Psoas muscle (tissue), 8 donors: ENCODE measurements at regions of chr6 and their contacts with region 1.

Region 1: DNA sequence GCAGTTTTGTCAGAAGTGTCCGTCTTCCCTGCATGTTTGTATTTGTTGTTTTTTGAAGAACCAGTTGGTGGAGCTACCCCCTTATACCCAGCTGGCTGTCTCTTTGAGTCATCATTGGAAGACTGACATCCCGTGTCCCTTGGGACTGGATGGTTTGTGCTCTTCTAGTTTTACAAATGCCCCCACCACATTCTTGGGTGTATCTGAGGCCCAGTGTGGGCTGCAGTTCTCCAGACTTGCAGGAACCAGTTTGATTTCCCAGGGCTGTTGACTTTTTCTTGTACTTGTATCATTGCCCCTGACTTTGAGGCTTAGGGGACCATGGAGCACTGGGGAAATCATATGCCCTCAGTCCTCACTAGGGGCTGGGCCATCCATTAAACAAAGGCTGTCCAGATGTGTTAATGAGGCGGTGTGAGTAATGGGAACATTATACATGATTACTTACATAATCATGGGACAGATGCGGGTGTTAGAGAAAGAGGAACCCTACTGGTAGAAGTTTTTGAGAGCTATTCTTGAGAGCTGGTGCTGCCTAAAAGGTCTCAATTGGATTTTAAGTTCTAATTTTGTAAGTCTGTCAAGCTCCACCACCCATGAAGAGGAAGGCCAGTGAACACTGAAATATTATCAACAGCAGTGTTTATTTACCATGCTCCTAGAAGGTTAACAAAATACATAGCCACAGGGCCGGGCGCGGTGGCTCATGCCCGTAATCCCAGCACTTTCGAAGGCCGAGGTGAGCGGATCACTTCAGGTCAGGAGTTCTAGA is 8.4 kb downstream of the JARID2 start:
- DNase-seq: no peak
- ATAC-seq: peak; percentile 59 to 76 (median 68)
- H3K4me3 ChIP-seq: no peak overlapping the region
- H3K27ac ChIP-seq: peak overlapping the region; percentile 98
- H3K4me1 ChIP-seq: peaks cover 67% of the 10 kb centered on the region
- H3K27me3 ChIP-seq: no peaks in the 10 kb centered on the region
- CTCF ChIP-seq: peak; percentile 24

Region 2: GRCh38 chr6:15287670-15288375 is 33.6 kb after region 1 on chr6:
- intact Hi-C with region 1: no loop called
- DNase-seq: no peak
- ATAC-seq: no peak
- H3K4me3 ChIP-seq: no peak overlapping the region
- H3K27ac ChIP-seq: no peak overlapping the region
- H3K4me1 ChIP-seq: peaks cover 41% of the 10 kb centered on the region
- H3K27me3 ChIP-seq: no peaks in the 10 kb centered on the region
- CTCF ChIP-seq: no peak

Region 3: DNA sequence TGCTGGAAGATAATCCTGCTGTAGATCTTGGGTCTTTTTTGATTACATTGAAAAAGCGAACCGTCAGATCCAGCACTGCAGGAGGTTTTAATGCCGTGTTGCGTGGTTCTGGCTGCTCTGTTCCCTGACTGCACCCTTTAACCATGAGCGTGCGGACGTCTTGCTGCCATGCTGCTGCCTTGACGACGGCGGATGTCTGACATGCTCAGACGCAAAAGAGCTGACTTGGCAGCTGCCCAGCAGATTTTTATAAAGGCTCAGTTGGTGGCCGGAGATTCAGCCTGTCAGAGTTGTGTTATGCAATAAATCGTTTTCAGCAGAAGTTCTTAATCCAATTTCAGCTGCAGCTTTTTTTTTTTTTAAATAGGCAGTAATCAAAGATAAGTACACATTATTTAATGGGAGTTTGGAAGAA is 111.0 kb after region 1 on chr6:
- intact Hi-C with region 1: loop called in 1 of 2 experiments (anchors 10 kb)
- DNase-seq: peak; percentile 80 to 91
- ATAC-seq: peak; percentile 83 to 85 (median 84)
- H3K4me3 ChIP-seq: peak overlapping the region; percentile 41
- H3K27ac ChIP-seq: peak overlapping the region; percentile 82
- H3K4me1 ChIP-seq: peaks cover 75% of the 10 kb centered on the region
- H3K27me3 ChIP-seq: no peaks in the 10 kb centered on the region
- CTCF ChIP-seq: no peak

Region 4: DNA sequence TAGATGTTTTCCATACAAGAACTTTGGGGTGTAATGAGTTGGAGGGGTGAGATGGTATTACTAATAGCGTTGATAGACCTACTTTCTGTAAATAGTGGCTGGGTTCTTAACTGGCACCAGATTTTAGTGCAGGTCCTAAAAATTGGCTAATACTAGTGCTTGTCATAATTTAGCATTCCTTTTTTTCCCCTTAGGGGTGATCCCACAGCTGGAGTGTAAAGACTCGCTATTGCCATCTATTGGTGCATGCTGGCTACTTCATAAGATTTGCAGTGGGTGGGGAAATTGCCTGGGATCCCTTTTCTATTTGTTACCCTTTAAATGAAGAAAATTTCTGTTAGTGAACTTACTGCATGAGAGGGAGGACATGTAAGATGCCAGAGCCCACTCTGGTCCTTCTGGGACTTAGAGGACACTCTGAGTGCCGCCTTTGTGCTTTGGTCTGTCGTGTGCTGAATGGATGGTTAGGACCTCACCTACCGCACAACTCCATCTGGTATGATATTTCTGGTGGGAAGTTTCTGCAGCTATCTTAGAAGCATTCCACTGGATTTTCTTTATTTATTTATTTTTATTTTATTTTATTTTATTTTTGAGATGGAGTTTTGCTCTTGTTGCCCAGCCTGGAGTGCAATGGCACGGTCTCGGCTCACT is 187.1 kb after region 1 on chr6:
- intact Hi-C with region 1: loop called in 1 of 2 experiments (anchors 5 kb)
- DNase-seq: no peak
- ATAC-seq: peak; percentile 57 to 69 (median 66)
- H3K4me3 ChIP-seq: no peak overlapping the region
- H3K27ac ChIP-seq: peak overlapping the region; percentile 63
- H3K4me1 ChIP-seq: peaks cover 80% of the 10 kb centered on the region
- H3K27me3 ChIP-seq: no peaks in the 10 kb centered on the region
- CTCF ChIP-seq: peak; percentile 73

Region 5: DNA sequence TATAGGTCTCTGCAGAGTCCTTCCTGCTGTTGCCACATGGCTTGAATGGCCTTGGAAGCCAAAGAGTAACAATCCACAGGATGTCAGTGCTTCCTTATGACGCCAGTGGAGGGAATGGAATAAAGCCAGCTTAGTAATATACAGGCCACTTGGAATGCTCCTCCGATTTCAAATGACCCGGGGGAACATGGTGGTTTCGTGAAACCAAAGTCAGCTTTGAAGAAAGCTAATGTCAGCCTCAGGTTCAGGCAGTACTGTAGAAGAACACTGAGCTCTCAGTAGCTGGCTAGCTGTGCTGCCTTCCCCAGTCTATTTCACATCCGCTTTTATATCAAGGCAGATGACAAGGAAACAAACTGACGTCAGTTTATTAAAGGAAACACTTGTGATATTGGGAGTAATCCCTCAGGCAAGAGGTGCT is 219.5 kb after region 1 on chr6:
- intact Hi-C with region 1: loop called (anchors 5 to 10 kb)
- DNase-seq: no peak
- ATAC-seq: peak; percentile 76 to 89 (median 84)
- H3K4me3 ChIP-seq: peak overlapping the region; percentile 16
- H3K27ac ChIP-seq: peak overlapping the region; percentile 79
- H3K4me1 ChIP-seq: peaks cover 47% of the 10 kb centered on the region
- H3K27me3 ChIP-seq: no peaks in the 10 kb centered on the region
- CTCF ChIP-seq: no peak

Region 6: GRCh38 chr6:15491255-15491985 is 237.2 kb after region 1 on chr6:
- intact Hi-C with region 1: loop called in 1 of 2 experiments (anchors 5 kb)
- DNase-seq: peak; percentile 73 to 85
- ATAC-seq: peak; percentile 27 to 63 (median 41)
- H3K4me3 ChIP-seq: no peak overlapping the region
- H3K27ac ChIP-seq: peak overlapping the region; percentile 51
- H3K4me1 ChIP-seq: peaks cover 32% of the 10 kb centered on the region
- H3K27me3 ChIP-seq: no peaks in the 10 kb centered on the region
- CTCF ChIP-seq: peak; percentile 95